ENCODE measurements at regions of chr20 and their contacts with region 1.

Region 1: DNA sequence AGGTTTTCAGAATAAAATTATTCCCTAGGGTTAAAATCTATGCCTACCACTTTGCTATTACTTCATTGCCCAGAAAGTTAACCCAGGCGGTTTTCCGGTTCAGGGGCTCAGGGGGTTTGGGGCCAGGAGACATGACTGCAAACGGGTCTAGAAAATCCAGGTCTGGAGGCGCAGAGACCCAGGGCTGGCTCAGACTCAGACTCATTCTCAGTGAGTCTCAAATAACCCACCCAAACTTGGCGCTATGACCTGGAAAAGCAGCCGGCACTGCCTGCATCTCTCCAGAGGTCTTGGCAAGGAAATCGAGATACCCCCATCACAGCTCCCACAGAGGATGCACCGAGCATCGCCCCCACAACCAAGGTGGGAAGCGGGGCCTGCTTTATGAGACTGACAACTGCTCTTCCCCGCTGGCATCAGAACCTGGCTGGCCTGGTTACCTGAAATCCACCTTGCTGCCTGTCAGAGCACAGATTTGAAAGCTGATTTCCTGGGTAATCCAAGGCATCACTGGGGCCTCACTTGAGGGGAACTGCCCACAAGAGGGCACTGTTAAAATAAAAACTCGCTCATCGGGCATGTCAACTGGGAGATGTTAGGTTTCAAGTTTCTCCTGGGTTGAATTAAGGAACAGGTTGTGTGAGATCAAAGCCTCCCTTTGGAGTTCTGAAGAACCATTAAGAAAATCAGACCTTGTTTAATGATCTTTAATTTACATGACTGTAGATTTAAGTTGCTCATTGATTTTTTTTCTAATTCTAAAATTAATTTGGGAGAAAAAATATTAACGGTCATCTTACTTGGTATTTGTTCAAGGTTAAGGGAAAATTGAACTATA is 55.1 kb downstream of the KIF16B start:
- DNase-seq: peak in 5 of 7 donors; percentile 41 to 73 (median 57)
- H3K4me3 ChIP-seq: no peak overlapping the region
- H3K27ac ChIP-seq: no peak overlapping the region
- H3K4me1 ChIP-seq: peaks cover 0 to 7% of the 10 kb centered on the region in 2 donors
- H3K27me3 ChIP-seq: no peaks in the 10 kb centered on the region
- CTCF ChIP-seq: peak; percentile 45 to 68 (median 60)
- POLR2A ChIP-seq: no peak

Region 2: DNA sequence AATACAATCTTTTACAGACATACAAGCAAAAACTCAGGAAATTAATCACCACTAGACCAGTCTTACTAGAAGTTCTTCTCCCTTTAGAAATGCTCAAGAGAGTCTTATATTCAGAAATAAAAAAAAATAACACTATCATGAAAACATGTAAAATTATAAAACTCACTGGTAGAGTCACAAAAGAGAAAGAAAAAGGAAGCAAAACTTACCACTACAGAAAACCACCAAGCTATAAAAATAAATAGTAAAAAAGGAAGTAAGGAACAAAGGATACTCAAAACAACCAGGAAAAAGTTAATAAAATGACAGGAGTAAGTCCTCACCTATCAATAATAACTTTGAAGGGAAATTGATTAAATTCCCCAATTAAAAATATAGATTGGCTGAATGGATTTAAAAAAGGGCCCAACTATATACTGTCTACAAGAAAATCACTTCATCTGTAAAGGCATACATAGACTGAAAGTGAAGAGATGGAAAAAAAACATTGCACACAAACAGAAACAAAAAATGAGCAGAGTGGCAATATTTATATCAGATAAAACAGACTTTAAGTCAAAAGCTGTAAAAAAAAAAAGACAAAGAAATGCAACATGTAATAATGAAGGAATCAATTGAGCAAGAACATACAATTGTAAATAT is 434.4 kb before region 1 on chr20:
- intact Hi-C with region 1: no loop called
- DNase-seq: no peak
- H3K4me3 ChIP-seq: no peak overlapping the region
- H3K27ac ChIP-seq: no peak overlapping the region
- H3K4me1 ChIP-seq: no peaks in the 10 kb centered on the region
- H3K27me3 ChIP-seq: no peaks in the 10 kb centered on the region
- CTCF ChIP-seq: no peak
- POLR2A ChIP-seq: no peak

Region 3: GRCh38 chr20:16639027-16639941 is 121.1 kb after region 1 on chr20:
- intact Hi-C with region 1: loop called in 1 of 2 experiments (anchors 5 kb)
- DNase-seq: no peak
- H3K4me3 ChIP-seq: no peak overlapping the region
- H3K27ac ChIP-seq: no peak overlapping the region
- H3K4me1 ChIP-seq: no peaks in the 10 kb centered on the region
- H3K27me3 ChIP-seq: no peaks in the 10 kb centered on the region
- CTCF ChIP-seq: no peak
- POLR2A ChIP-seq: no peak

Region 4: DNA sequence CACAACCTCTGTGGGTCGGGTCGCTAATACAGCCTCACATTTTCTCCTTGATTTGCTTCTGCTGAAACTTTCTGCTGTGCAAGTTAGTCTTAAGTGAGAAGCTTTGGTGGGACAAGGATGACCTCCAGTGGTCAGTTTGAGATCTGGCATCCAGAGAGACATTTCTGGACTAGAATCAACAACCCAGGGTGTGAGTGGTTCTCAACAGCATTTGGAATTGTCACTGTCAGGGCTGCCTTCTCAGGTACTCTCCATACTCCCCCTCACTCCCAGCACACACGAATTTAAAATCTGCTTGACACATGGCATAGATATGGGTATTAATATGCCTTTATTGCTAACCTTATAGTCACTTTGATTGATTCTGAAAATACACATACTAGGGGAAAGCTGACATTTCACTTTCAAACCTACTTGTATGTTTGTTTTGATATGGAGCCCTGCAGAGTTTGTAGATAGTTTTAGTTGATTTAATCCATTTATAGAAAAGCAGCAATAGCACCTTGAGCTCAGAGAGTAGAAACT is 243.2 kb after region 1 on chr20:
- intact Hi-C with region 1: loop called in 1 of 2 experiments (anchors 10 kb)
- DNase-seq: peak; percentile 38 to 81 (median 53)
- H3K4me3 ChIP-seq: no peak overlapping the region
- H3K27ac ChIP-seq: no peak overlapping the region
- H3K4me1 ChIP-seq: no peaks in the 10 kb centered on the region
- H3K27me3 ChIP-seq: no peaks in the 10 kb centered on the region
- CTCF ChIP-seq: peak; percentile 59 to 87 (median 80)
- POLR2A ChIP-seq: no peak

Measured in adrenal gland (tissue), 19 donors.